Endothelial cell of umbilical vein (primary cell): ENCODE measurements at regions of chr1 and their contacts with region 1.

Region 1: DNA sequence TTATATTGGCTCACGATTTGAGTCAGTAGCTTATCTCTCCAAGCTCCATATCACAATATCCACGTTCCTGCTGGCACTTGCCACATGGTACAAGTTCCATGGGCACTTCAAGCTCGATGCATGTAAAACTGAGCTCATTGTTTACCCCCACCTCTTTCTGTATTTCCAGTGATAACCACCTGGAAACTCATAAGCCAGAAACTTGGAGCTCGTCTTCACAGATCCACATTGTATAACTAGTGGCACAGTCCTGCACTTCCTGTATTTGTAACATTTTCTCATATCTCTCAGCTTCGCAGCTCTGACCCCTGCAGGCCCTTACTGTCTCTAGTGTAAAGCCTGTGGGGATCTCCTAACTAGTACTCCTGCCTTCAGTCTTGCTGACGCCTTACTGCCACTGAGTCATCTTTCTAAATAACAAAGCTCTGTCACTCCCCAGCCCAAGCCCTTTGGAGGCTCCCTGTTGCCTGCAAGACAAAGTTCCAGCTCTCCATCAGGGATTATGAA is 6.5 kb upstream of the C2CD4D start:
- DNase-seq: peak; percentile 60
- H3K4me3 ChIP-seq: no peak overlapping the region
- H3K27ac ChIP-seq: no peak overlapping the region
- H3K4me1 ChIP-seq: peaks cover 19% of the 10 kb centered on the region
- H3K27me3 ChIP-seq: peaks cover 3 to 6% of the 10 kb centered on the region in 2 experiments
- CTCF ChIP-seq: no peak
- POLR2A ChIP-seq: no peak

Region 2: DNA sequence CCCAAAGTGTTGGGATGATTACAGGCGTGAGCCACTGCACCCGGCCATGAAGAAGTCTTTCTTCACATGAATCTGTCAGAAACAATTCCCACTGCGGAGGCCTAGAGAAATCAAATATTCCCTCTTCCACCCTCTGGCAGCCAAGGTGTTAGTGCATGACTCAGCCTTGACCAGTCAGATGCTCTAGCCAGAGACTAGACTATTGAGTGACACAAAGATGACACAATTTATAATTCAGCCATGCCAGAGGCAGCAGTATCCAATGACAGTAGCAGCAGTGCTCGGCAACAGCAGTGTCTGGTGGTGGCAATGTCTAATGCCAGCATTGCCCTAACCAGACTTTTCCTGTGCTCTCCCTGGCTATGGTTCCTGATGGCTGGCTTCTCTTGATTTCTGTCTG is 950.5 kb before region 1 on chr1:
- CTCF ChIA-PET with region 1: no interaction called
- POLR2A ChIA-PET with region 1: no interaction called
- dilution Hi-C with region 1: no loop called
- intact Hi-C with region 1: no loop called
- DNase-seq: no peak
- H3K4me3 ChIP-seq: no peak overlapping the region
- H3K27ac ChIP-seq: no peak overlapping the region
- H3K4me1 ChIP-seq: no peaks in the 10 kb centered on the region
- H3K27me3 ChIP-seq: peaks cover 0 to 13% of the 10 kb centered on the region in 2 experiments
- CTCF ChIP-seq: no peak
- POLR2A ChIP-seq: no peak

Region 3: DNA sequence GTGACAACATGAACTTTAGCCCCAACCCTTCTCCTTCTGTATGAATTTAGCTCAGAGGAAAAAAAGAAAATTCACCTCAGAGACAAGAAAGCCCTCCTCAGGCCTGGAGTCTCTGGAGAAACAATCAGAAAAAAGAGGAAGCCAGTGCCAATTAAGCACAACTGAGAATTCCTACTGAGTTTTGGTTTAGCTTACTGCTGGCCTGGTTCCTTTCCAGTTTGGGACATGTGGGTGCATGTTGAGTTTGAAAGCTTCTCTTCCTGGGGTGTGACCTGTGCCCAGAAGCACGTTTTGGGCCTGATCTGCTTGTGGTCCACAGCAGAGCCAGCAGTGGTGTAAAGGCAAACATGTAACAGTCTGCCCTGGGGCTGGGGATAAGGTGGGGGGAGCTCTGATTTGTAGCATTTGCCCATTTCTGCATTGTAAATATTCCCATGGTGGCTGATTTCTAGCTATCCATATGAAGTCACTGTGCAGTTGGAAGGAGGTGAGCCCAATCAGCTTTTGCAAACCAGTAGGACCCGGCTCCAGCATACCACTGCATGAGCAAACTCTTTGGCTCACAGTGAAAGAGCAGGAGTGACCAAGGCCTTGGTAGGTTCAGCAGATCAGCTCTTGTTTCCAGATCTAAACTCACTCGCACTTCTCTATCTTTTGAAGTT is 12.0 kb after region 1 on chr1:
- CTCF ChIA-PET with region 1: interaction called, 22 read pairs
- POLR2A ChIA-PET with region 1: no interaction called
- dilution Hi-C with region 1: no loop called
- intact Hi-C with region 1: no loop called
- DNase-seq: no peak
- H3K4me3 ChIP-seq: no peak overlapping the region
- H3K27ac ChIP-seq: no peak overlapping the region
- H3K4me1 ChIP-seq: peaks cover 7% of the 10 kb centered on the region
- H3K27me3 ChIP-seq: peaks cover 0 to under 1% of the 10 kb centered on the region in 2 experiments
- CTCF ChIP-seq: no peak
- POLR2A ChIP-seq: no peak

Region 4: DNA sequence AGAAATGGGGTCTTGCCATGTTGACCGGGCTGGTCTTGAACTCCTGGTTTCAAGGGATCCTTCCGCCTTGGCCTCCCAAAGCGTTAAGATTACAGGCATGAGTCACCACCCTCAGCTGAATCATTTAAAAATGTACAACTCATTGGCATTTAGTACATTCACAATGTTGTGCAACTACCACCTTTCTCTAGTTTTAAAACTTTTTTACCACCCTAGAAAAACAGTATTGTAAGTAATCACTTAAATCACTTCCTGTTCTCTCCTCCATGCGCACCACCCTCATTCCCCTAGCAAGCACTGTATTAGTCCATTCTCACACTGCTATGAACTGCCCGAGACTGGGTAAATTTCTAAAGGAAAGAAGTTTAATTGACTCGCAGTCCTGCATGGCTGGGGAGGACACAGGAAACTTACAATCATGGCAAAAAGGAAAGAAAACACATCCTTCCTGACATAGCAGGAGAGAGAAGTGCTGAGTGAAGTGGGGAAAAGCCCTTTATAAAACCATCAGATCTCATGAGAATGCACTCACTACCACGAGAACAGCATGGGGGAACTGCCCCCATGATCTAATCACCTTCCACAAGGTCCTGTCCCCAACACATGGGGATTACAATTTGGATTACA is 21.8 kb after region 1 on chr1:
- CTCF ChIA-PET with region 1: interaction called, 3 read pairs
- POLR2A ChIA-PET with region 1: no interaction called
- dilution Hi-C with region 1: no loop called
- intact Hi-C with region 1: loop called (anchors 2 kb)
- DNase-seq: peak; percentile 81
- H3K4me3 ChIP-seq: no peak overlapping the region
- H3K27ac ChIP-seq: peak overlapping the region; percentile 36
- H3K4me1 ChIP-seq: peaks cover 16% of the 10 kb centered on the region
- H3K27me3 ChIP-seq: no peaks in the 10 kb centered on the region
- CTCF ChIP-seq: no peak
- POLR2A ChIP-seq: no peak

Region 5: GRCh38 chr1:151909150-151910149 is 63.3 kb after region 1 on chr1 and contains the start of gene THEM4:
- CTCF ChIA-PET with region 1: no interaction called
- POLR2A ChIA-PET with region 1: no interaction called
- dilution Hi-C with region 1: no loop called
- intact Hi-C with region 1: loop called (anchors 5 kb)
- DNase-seq: peak; percentile 93
- H3K4me3 ChIP-seq: peak within 1 kb of the TSS; percentile 48 to 72 (median 50)
- H3K27ac ChIP-seq: peak within 1 kb of the TSS; percentile 65
- H3K4me1 ChIP-seq: peaks cover 27% of the 10 kb centered on the region
- H3K27me3 ChIP-seq: peaks cover 2 to 7% of the 10 kb centered on the region in 2 experiments
- CTCF ChIP-seq: peak; percentile 25 to 46
- POLR2A ChIP-seq: peak; percentile 87
- total RNA-seq, gene THEM4: 22.1 and 24.9 TPM in 2 replicates

Region 6: DNA sequence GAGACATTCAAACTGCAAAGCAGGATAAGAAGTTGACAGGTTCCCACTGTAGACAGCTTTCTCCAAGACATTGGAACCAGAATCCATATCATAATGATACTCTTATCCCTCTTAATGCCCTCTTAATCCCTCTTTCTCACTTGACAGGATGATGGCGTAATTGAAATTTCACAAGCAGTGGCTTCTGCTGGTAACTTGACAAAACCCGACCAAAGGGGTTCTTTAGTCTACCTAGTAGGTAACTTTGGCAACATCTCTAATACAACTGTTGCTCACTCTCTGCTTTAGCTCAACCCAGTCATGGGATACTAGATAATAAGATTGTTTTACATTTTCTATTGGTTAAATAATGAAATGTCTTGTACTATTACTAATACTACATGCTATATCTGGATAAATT is 112.8 kb after region 1 on chr1:
- CTCF ChIA-PET with region 1: no interaction called
- POLR2A ChIA-PET with region 1: no interaction called
- dilution Hi-C with region 1: no loop called
- intact Hi-C with region 1: no loop called
- DNase-seq: no peak
- H3K4me3 ChIP-seq: no peak overlapping the region
- H3K27ac ChIP-seq: no peak overlapping the region
- H3K4me1 ChIP-seq: peaks cover 27% of the 10 kb centered on the region
- H3K27me3 ChIP-seq: no peaks in the 10 kb centered on the region
- CTCF ChIP-seq: no peak
- POLR2A ChIP-seq: no peak